Activated CD4-positive, alpha-beta memory T cell treated with anti-CD3 and anti-CD28 coated beads for 36 hours (primary cell): ENCODE measurements at regions of chr3 and their contacts with region 1.

Region 1: DNA sequence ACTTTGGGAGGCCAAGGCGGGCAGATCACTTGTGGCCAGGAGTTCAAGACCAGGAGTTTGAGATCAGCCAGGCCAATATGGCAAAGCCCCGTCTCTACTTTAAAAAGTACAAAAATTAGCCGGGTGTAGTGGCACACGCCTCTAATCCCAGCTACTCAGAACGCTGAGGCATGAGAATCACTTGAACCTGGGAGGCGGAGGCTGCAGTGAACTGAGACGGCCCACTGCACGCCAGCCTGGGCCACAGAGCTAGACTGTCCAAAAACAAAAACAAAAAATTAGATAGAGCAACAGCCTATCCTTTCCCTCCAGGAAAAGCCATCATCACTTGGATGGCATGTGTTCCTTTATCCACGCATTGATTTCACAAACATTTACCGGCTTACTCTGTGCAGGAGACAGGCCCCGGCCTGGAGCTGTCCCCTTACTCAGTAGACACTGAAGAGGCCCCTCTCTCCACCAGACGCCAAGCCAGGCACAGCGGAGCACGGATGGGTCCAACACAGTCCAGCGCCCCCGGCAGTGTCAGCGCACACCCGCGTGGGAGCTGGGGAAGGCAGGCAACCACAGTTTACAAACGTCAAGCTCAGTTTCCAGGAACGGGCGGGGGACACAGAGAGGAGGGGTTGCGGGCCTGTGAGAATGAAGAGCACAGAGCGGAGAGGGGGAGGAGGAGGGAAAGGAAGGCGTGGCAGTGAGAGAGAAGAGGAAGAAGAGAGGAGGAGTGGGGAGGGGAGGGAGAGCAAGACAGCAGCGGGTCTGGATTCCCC is 3.1 kb downstream of the GP5 start:
- DNase-seq: peak; percentile 74
- H3K4me3 Mint-ChIP-seq: peak overlapping the region; percentile 44
- H3K27ac Mint-ChIP-seq: peak overlapping the region; percentile 49
- H3K4me1 Mint-ChIP-seq: peaks cover 51% of the 10 kb centered on the region
- H3K27me3 Mint-ChIP-seq: peaks cover 33% of the 10 kb centered on the region

Region 2: GRCh38 chr3:194481103-194481502 is 85.1 kb after region 1 on chr3:
- CTCF ChIA-PET with region 1: no interaction called
- POLR2A ChIA-PET with region 1: no interaction called
- intact Hi-C with region 1: no loop called
- DNase-seq: no peak
- H3K4me3 Mint-ChIP-seq: no peak overlapping the region
- H3K27ac Mint-ChIP-seq: peak overlapping the region; percentile 67
- H3K4me1 Mint-ChIP-seq: peaks cover 46% of the 10 kb centered on the region
- H3K27me3 Mint-ChIP-seq: no peaks in the 10 kb centered on the region

Region 3: DNA sequence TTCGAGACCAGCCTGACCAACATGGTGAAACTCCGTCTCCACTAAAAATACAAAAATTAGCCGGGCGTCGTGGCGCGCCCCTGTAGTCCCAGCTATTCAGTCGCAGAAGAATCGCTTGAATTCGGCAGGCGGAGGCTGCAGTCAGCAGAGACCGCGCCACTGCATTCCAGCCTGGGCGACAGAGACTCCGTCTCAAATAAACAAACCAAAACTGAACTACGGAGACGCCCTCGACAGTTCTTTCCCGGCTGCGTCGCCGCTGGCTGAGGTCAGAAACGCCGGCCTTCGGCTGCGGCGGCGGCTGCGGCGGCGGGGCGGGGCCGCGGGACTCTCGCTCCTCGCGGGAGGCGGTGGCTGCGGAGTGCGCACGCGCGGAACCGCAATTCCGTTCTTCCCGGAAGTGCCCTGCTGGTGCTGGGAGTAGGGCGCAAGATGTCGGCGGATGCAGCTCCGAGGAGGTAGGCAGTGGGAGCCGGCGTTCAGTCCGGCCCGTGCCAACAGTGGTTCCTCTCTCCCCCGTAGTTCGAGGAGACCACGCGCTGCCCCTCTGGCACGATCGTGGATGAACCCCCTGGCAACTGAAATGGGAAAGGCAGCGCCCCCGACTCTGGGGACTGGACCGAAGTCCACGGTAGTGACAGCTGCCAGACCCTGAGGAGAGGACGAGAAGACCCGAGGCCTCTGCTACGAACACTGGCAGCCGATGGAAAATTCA is 187.8 kb after region 1 on chr3:
- CTCF ChIA-PET with region 1: no interaction called
- POLR2A ChIA-PET with region 1: no interaction called
- intact Hi-C with region 1: loop called (anchors 2 kb)
- DNase-seq: peak; percentile 96
- H3K4me3 Mint-ChIP-seq: peak overlapping the region; percentile 96
- H3K27ac Mint-ChIP-seq: peak overlapping the region; percentile 97
- H3K4me1 Mint-ChIP-seq: peaks cover 27% of the 10 kb centered on the region
- H3K27me3 Mint-ChIP-seq: no peaks in the 10 kb centered on the region

Region 4: GRCh38 chr3:194632809-194633348 is 236.9 kb after region 1 on chr3:
- CTCF ChIA-PET with region 1: no interaction called
- POLR2A ChIA-PET with region 1: no interaction called
- intact Hi-C with region 1: loop called (anchors 1 kb)
- DNase-seq: peak; percentile 20
- H3K4me3 Mint-ChIP-seq: peak overlapping the region; percentile 82
- H3K27ac Mint-ChIP-seq: no peak overlapping the region
- H3K4me1 Mint-ChIP-seq: peaks cover 5% of the 10 kb centered on the region
- H3K27me3 Mint-ChIP-seq: no peaks in the 10 kb centered on the region